GM10248 (cell line): ENCODE measurements at regions of chr6 and their contacts with region 1.

Region 1: DNA sequence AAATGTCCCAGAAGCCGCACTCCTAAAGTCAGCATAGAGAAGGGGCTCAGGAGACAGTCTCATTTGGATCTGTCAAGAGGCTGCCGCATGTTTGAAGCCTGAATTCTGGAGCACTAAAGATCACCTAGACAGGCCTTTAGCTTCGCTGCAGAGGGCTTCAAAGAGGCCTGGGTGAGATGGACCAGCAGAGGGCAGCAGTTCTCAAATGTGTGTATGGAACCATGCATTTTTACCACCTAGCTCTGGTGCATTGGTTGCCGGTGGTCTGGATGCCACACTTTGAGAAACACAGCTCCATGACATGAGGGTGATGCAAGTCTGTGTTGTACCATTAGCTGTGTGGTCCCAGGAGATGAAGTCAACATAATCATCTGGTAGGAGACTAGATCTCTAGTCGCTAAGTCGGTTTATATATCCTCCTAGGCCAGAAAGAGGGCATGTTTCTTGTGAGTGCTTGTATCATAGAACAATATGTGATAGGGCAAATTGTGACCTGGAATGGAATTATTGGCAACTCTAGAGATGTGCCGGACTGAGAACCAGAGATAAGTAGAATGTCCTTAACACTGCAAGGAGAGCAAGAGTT is 64.8 kb downstream of the KIAA0319 start:
- DNase-seq: peak; percentile 49
- CTCF ChIP-seq: peak; percentile 86

Region 2: GRCh38 chr6:24157886-24158285 is 423.3 kb before region 1 on chr6:
- CTCF ChIA-PET with region 1: no interaction called
- POLR2A ChIA-PET with region 1: no interaction called
- DNase-seq: no peak
- CTCF ChIP-seq: no peak

Region 3: DNA sequence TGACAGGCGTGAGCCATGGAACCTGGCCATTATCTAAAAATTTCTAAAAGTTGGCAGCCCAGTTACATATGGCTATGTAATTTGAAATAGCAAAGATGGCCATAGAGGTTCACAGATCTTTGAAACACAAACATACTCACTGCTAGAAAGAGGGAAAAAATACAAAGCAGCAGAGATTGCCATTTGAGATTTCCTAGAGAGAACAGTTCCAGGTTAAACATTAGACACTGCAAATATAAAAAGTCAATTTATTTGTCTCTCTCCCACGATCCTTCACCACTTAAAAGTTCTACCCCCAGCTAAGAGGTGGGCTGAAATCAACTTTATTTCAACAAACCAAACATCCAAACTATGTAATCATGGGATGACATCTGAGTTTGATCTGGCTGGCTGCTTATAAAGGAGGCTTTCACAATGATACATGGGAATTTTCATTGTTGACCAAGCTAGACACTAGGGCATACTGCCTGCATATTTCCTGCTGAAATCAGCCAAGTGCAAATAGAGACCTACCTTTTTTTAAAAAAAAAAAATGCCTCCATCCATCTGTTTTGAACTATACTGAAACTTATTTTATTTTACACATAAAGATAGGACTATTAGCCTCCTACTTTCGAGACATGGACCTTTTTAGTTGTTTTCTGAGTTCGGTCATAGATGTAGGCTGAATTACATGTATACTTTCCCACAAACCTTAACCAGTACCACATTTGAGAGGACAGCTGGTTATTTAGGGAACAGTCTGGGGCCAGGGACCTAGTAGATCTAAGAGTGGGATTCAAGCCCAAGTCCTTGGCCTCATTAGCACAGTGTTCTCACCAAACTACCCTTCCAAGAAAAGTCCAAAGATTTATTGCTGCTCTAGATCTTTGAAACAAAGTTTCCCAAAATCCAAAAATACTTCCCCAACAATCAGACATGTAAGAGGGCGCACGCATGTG is 239.9 kb before region 1 on chr6:
- CTCF ChIA-PET with region 1: no interaction called
- POLR2A ChIA-PET with region 1: no interaction called
- DNase-seq: no peak
- CTCF ChIP-seq: no peak

Region 4: DNA sequence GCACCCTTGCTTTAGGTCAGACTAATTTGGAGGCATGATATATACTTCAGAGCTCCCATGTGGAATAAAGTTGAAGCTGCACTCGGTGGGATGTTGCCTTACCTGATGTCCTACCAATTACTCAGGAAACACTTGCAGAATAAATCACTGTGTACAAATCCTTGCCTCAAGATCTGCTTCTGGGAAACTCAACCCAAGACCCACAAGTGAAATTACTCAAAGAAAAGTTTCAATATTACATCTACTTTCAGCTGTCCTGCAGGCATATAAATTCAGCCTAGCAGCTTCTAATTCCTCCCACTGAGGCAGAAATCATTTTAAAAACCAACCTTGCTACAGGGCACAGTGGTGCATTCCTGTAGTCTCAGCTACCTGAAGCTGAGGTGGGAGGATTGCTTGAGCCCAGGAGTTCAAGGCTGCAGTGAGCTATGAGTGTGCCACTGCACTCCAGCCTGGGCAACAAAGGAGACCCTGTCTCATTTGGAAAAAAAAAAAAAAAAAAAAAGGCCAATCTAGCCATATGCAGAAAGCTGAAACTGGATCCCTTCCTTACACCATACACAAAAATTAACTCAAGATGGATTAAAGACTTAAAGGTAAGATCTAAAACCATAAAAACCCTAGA is 202.6 kb before region 1 on chr6:
- CTCF ChIA-PET with region 1: no interaction called
- POLR2A ChIA-PET with region 1: no interaction called
- DNase-seq: no peak
- CTCF ChIP-seq: no peak

Region 5: DNA sequence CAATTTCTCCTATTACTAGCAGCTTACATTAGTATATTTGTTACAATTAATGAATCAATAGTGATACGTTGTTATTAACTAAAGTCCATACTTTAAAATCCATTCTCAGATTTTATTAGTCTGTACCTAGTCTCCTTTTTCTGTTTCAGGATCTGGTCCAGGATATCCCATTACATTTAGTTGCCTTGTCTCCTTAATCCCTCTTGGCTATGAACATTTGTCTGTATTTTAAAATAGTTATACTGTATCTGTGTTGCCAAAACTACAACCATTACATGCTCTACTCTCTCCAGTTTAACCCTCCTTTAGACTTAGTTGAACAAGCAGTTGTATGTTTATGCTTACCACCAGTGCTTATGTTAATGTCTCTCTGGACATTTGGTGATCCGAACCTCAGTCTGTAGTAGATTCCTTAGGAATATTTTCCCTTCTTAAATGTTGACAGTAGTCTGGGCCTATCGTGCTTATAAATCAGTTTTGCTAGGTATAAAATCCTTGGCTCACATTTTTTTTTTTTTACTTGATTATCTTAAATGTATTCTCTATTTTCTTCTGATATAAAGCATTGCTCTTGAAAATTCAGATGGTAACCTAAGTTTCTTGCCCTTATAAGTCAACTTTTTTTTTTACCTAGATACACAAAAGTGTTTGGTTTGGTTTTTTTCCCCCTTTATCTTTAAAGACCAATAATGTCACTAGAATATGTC is 74.2 kb before region 1 on chr6:
- CTCF ChIA-PET with region 1: no interaction called
- POLR2A ChIA-PET with region 1: no interaction called
- DNase-seq: no peak
- CTCF ChIP-seq: no peak

Region 6: DNA sequence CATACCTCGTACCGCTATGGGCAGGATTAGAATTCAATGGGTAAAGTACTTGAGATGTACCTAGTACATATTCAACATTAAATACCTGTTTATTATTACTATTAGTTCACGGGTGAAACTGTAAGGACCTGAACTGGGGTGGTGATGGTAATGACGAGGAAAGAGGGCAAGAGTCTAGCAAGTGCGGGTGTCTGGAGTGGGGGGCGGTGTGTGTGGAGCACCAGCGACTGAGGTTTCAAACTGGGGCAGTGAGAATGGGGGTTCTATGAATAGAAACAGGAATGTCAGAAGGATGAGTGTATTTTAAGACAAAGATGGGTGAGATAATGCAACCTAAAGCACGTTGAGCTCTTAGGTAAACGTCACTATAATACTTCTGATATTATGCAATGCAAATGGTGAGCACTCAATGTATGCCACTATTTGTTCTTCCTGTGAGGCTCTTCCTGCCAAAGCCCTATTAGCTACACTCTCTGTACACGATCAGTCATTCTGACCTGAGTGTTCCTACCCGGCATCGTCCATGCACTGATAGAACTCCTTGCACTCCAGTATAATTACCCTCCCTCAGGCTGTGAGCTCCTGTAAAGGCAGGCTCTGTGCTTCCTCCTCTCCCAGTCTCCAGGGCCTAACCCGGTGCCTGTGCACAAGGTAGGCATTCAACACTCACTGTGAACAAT is 31.4 kb before region 1 on chr6:
- CTCF ChIA-PET with region 1: interaction called, 63 read pairs
- POLR2A ChIA-PET with region 1: no interaction called
- DNase-seq: no peak
- CTCF ChIP-seq: no peak

Region 7: DNA sequence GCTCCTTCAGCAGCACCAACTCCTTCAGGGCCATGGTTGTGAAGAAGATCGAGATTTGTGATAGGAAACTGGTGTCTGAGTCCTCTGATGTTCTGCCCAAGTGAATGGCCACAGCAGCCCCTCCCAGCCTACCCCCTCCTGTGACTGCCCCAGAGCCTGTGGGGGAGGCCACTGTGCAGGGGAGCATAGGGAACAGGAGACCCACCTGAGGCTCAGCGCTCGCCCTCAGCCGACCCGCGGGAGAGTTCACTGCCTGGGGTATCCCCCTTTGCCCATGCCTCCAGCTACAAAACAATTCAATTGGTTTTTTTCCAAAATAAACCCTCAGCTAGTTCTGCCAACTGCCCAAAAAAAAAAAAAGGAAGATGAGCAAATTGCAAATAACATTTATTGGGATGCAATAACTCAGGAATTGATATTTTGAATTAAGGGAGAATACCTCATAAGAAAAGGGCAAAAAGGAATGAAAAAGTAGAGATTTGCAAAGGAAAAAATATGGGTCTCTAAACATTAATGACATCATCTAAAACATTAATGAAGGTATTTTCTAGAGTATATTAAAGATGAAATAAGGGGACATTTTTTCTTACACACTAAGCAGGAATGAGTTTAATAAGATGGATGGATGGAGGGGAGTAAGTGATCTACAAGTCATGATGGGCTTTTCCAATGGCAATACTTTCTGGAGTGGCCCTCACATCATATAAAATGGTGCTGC is 18.7 kb after region 1 on chr6:
- CTCF ChIA-PET with region 1: interaction called, 19 read pairs
- POLR2A ChIA-PET with region 1: no interaction called
- DNase-seq: no peak
- CTCF ChIP-seq: no peak

Region 8: DNA sequence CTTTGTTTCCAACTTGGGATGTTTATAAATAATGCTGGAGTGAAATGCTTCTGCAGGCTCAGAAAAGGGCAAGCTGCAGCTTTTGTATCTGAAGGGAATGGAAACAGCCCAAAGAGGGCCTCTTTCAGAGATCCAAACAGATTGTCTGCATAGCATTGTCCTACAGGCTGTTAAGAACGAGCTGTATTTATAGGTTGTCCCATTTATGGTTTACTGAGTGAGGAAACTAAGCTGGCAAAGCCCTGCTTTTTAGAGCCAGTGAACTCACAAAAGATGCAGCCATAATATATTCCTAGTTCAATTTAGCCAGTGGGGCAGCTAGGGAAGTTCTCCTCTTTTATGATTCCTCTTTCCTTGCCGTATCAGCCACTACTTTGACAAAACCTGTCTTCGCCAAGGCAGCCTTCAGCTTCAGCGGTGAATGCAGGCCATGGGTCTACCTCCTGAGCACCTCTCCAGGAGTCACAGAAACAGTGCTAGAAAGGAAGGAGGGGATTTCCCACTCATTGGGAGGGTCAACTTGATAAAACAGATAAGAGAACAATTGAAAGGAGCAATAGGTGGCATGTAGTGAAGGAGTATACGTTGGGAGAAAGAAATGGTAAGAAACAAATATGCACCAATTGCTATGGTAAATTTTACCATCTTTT is 49.8 kb after region 1 on chr6:
- CTCF ChIA-PET with region 1: interaction called, 19 read pairs
- POLR2A ChIA-PET with region 1: no interaction called
- DNase-seq: no peak
- CTCF ChIP-seq: no peak

Region 9: DNA sequence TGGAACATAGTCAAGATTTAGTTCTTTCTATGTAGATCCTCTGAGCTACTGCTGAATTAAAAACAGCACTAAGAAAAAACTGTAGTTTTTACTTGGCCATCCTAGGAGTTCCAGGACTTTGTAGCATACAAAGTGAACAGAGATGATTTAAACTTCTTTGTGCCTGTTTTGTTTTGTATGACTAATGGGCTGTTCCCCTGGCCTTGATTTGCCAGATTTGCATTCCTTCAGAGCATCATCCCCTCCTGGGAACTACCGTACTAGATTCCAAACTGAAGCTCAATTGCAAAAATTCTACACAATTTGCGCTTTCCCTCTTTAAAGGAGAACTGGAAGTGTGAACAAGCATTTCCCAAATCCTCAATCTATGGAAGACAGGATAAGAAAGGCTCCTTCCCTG is 108.8 kb after region 1 on chr6:
- CTCF ChIA-PET with region 1: interaction called, 13 read pairs
- POLR2A ChIA-PET with region 1: no interaction called
- DNase-seq: no peak
- CTCF ChIP-seq: no peak